ENCODE measurements at regions of chr4 and their contacts with region 1.

Region 1: DNA sequence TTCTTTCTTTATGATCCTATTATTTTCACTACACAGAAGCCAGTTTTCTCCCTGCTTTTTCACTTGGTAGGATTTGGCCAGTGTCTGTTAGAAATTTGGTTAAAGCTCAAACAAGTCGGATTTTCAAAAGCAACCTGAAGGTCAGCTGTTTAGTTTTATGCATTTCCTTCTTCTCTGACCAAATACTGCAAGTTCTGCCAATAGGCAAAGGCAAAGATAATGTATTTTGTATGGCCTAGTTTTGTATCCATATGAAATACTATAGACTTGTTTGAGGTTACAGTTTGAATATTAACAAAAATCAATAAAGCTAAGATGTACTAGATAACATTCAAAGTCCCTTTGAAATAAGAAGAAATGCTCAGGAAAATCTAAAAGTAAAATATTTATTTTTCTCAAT is 439.4 kb downstream of the TRIML1 start:
- DNase-seq: no peak
- H3K4me3 ChIP-seq: no peak overlapping the region
- H3K27ac ChIP-seq: no peak overlapping the region
- H3K4me1 ChIP-seq: no peaks in the 10 kb centered on the region
- H3K27me3 ChIP-seq: no peaks in the 10 kb centered on the region
- CTCF ChIP-seq: no peak
- POLR2A ChIP-seq: no peak

Region 2: DNA sequence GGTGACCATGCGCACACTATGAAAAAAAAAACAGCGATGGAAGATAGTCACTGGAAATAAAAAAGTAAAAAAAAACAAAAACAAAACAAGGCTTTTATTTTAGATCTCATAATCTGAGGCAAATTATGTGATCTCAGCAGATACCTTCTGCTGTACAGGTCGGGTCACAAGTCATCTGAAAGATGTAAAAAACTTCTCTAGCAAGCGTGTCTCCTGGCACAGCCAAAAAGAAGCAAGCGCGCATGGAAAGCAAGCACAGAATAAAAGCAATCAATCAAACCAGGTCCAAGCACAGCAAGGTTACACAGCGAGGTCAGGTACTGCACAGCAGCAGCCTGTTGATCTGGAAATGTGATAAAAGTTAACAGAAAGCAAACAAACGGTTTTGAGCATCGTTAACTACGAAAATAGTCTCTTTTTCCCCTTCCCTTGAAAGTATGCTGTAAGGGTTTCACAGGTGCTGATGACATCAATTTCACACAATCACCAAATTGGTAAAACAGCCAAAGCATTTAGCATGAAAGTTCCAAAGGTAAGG is 1944.0 kb before region 1 on chr4:
- intact Hi-C with region 1: loop called (anchors 10 kb)
- DNase-seq: no peak
- H3K4me3 ChIP-seq: no peak overlapping the region
- H3K27ac ChIP-seq: no peak overlapping the region
- H3K4me1 ChIP-seq: no peaks in the 10 kb centered on the region
- H3K27me3 ChIP-seq: no peaks in the 10 kb centered on the region
- CTCF ChIP-seq: no peak
- POLR2A ChIP-seq: no peak

Region 3: DNA sequence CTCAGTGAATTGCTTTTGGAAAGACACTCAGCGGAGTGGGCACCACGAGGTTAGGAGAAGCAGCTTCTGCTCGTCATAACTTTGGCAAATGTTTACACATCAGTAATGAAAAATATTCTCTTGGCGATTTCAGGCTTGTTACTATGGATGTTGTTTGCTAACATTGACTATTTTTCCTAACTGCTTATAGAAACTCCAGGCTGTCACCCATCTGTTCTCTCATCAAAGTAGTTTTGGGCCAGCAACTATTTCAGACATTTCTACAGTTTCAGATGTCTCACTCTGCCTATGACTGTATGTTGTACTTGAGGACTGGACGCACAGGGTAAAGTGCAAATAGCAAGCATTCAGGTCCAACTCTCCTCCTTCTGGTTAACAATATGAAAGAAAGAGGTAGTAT is 92.8 kb before region 1 on chr4:
- intact Hi-C with region 1: no loop called
- DNase-seq: no peak
- H3K4me3 ChIP-seq: no peak overlapping the region
- H3K27ac ChIP-seq: no peak overlapping the region
- H3K4me1 ChIP-seq: no peaks in the 10 kb centered on the region
- H3K27me3 ChIP-seq: no peaks in the 10 kb centered on the region
- CTCF ChIP-seq: no peak
- POLR2A ChIP-seq: no peak